ENCODE measurements at regions of chr21 and their contacts with region 1.

Region 1: GRCh38 chr21:38805328-38806152 is at the start of gene ETS2:
- DNase-seq: peak; percentile 61
- ATAC-seq: peak; percentile 77
- H3K4me3 ChIP-seq: peak within 1 kb of the TSS; percentile 50 to 86 (median 65)
- H3K4me3 Mint-ChIP-seq: peak within 1 kb of the TSS; percentile 82
- H3K27ac ChIP-seq: peak within 1 kb of the TSS in 1 of 2 donors; percentile 16
- H3K27ac Mint-ChIP-seq: no peak within 1 kb of the TSS
- H3K4me1 ChIP-seq: peaks cover 15 to 23% of the 10 kb centered on the region in 2 donors
- H3K4me1 Mint-ChIP-seq: peaks cover 24% of the 10 kb centered on the region
- H3K27me3 ChIP-seq: peaks cover 0 to 23% (median 11%) of the 10 kb centered on the region in 4 experiments
- H3K27me3 Mint-ChIP-seq: peaks cover 33% of the 10 kb centered on the region
- CTCF ChIP-seq: no peak
- total RNA-seq, gene ETS2: 5.6 and 6.1 TPM in 2 replicates

Region 2: GRCh38 chr21:38766987-38767722 is 38.4 kb before region 1 on chr21:
- CTCF ChIA-PET with region 1: interaction called, 3 read pairs
- POLR2A ChIA-PET with region 1: no interaction called
- intact Hi-C with region 1: loop called (anchors 2 kb)
- DNase-seq: peak; percentile 75
- ATAC-seq: peak; percentile 92
- H3K4me3 ChIP-seq: peak overlapping the region; percentile 17 to 73 (median 62)
- H3K4me3 Mint-ChIP-seq: peak overlapping the region; percentile 80
- H3K27ac ChIP-seq: peak overlapping the region; percentile 46 to 60
- H3K27ac Mint-ChIP-seq: peak overlapping the region; percentile 90
- H3K4me1 ChIP-seq: peaks cover 5 to 11% of the 10 kb centered on the region in 2 donors
- H3K4me1 Mint-ChIP-seq: peaks cover 28% of the 10 kb centered on the region
- H3K27me3 ChIP-seq: peaks cover 0 to 26% (median 0%) of the 10 kb centered on the region in 4 experiments
- H3K27me3 Mint-ChIP-seq: peaks cover 29% of the 10 kb centered on the region
- CTCF ChIP-seq: no peak

Region 3: GRCh38 chr21:38831526-38832467 is 26.3 kb after region 1 on chr21:
- CTCF ChIA-PET with region 1: no interaction called
- POLR2A ChIA-PET with region 1: no interaction called
- intact Hi-C with region 1: loop called (anchors 1 kb)
- DNase-seq: peak; percentile 71
- ATAC-seq: peak; percentile 82
- H3K4me3 ChIP-seq: peak overlapping the region in 1 of 5 experiments; percentile 49
- H3K4me3 Mint-ChIP-seq: peak overlapping the region; percentile 47
- H3K27ac ChIP-seq: peak overlapping the region in 1 of 2 donors; percentile 28
- H3K27ac Mint-ChIP-seq: peak overlapping the region; percentile 51
- H3K4me1 ChIP-seq: peaks cover 15 to 19% of the 10 kb centered on the region in 2 donors
- H3K4me1 Mint-ChIP-seq: peaks cover 18% of the 10 kb centered on the region
- H3K27me3 ChIP-seq: peaks cover 0 to 8% (median 1%) of the 10 kb centered on the region in 4 experiments
- H3K27me3 Mint-ChIP-seq: peaks cover 22% of the 10 kb centered on the region
- CTCF ChIP-seq: no peak

Region 4: GRCh38 chr21:39161064-39161463 is 355.5 kb after region 1 on chr21:
- CTCF ChIA-PET with region 1: no interaction called
- POLR2A ChIA-PET with region 1: no interaction called
- intact Hi-C with region 1: no loop called
- DNase-seq: no peak
- ATAC-seq: no peak
- H3K4me3 ChIP-seq: no peak overlapping the region
- H3K4me3 Mint-ChIP-seq: no peak overlapping the region
- H3K27ac ChIP-seq: no peak overlapping the region
- H3K27ac Mint-ChIP-seq: no peak overlapping the region
- H3K4me1 ChIP-seq: no peaks in the 10 kb centered on the region
- H3K4me1 Mint-ChIP-seq: no peaks in the 10 kb centered on the region
- H3K27me3 ChIP-seq: no peaks in the 10 kb centered on the region
- H3K27me3 Mint-ChIP-seq: peaks cover 20% of the 10 kb centered on the region
- CTCF ChIP-seq: no peak

Measured in B cell (primary cell).